ENCODE measurements at regions of chr4 and their contacts with region 1.

Region 1: GRCh38 chr4:112938461-112939058 is 110.9 kb upstream of the ANK2 start:
- DNase-seq: no peak
- ATAC-seq: peak in 1 of 8 donors; percentile 27
- H3K4me3 ChIP-seq: no peak overlapping the region
- H3K27ac ChIP-seq: no peak overlapping the region
- H3K4me1 ChIP-seq: peaks cover 0 to 11% (median 0%) of the 10 kb centered on the region in 9 donors
- H3K27me3 ChIP-seq: no peaks in the 10 kb centered on the region
- CTCF ChIP-seq: peak; percentile 33 to 75 (median 66)

Region 2: DNA sequence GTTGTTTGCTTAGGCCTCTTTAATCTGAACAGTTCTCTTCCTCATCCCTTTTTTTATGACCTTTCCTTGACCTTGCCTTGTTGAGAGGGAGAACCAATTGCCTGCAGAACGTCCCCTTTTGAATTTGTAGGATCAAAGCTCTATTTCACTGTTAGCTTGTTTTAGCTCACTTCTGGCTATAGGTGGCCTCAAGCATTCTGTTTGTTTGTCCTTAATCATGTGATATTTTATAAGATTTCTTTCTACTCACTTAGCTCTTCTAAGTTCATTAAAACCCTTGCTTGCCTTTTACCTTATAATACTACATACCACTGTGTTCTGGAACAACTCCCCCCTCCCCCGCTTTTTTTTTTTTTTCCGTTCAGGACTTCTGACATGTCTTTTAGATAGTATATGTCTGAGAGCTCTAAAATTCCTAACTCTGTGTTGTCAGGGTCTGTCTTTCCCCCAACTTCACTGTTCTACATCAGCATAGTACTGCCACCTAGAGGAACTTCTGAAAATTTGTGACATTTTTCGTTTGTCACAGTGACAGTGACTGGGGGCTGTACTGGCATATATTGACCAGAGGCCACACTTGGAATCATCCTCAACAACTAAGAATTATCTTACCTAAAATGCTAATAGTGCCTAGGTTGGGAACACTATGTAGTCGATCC is 173.1 kb before region 1 on chr4:
- intact Hi-C with region 1: loop called in 7 of 10 experiments (anchors 2 to 10 kb)
- DNase-seq: no peak
- ATAC-seq: peak in 6 of 8 donors; percentile 22 to 66 (median 45)
- H3K4me3 ChIP-seq: no peak overlapping the region
- H3K27ac ChIP-seq: peak overlapping the region in 1 of 10 donors; percentile 10
- H3K4me1 ChIP-seq: peaks cover 0 to 8% (median 0%) of the 10 kb centered on the region in 9 donors
- H3K27me3 ChIP-seq: no peaks in the 10 kb centered on the region
- CTCF ChIP-seq: peak; percentile 14 to 58 (median 47)

Region 3: GRCh38 chr4:112853662-112854256 is 84.8 kb before region 1 on chr4:
- intact Hi-C with region 1: loop called in 3 of 10 experiments (anchors 2 to 10 kb)
- DNase-seq: no peak
- ATAC-seq: no peak
- H3K4me3 ChIP-seq: no peak overlapping the region
- H3K27ac ChIP-seq: no peak overlapping the region
- H3K4me1 ChIP-seq: peaks cover 0 to 30% (median 9%) of the 10 kb centered on the region in 9 donors
- H3K27me3 ChIP-seq: no peaks in the 10 kb centered on the region
- CTCF ChIP-seq: peak in 7 of 9 donors; percentile 22 to 52 (median 35)

Region 4: DNA sequence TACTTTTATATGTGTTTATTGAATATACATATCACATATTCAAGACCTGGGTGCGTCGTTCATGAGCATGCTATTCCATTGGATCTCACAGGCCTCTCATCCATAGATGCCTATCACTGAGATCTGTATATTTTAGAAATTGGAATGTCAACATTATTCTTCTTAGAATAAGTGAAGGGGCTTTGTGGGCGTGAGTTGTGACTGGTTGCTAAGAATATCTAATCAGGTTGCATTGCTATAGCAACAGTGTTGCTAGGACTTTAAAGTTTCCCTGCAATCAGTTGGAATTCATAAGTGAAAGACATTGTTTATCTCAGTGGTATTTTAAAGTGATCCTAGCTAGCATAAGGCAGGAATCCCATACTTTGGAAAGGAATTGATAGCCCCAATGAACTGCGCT is 74.2 kb after region 1 on chr4:
- intact Hi-C with region 1: no loop called
- DNase-seq: no peak
- ATAC-seq: peak in 1 of 8 donors; percentile 30
- H3K4me3 ChIP-seq: no peak overlapping the region
- H3K27ac ChIP-seq: no peak overlapping the region
- H3K4me1 ChIP-seq: peaks cover 0 to 11% (median 0%) of the 10 kb centered on the region in 9 donors
- H3K27me3 ChIP-seq: no peaks in the 10 kb centered on the region
- CTCF ChIP-seq: no peak

Region 5: GRCh38 chr4:113094802-113095201 is 156.2 kb after region 1 on chr4:
- intact Hi-C with region 1: loop called in 1 of 10 experiments (anchors 10 kb)
- DNase-seq: no peak
- ATAC-seq: no peak
- H3K4me3 ChIP-seq: no peak overlapping the region
- H3K27ac ChIP-seq: no peak overlapping the region
- H3K4me1 ChIP-seq: no peaks in the 10 kb centered on the region
- H3K27me3 ChIP-seq: no peaks in the 10 kb centered on the region
- CTCF ChIP-seq: peak; percentile 28 to 72 (median 56)

Region 6: DNA sequence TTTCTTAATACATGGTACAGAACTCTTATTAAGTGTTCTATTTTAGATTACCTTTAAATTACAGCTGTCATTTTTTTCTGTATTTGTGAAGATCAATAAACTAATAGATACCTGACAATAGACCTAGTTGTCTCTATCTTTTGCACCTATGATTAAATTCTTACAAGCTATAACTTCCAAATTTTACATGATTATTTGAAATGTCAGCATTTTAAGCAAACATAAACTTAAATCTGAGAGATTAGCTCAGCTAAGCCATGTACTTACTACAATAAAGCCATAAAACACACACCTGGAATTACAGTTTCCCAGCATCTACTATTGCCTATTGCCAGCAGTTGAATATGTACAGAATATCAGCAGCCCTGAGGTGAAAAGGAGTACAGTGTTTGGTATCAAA is 1778.9 kb after region 1 on chr4:
- intact Hi-C with region 1: no loop called
- DNase-seq: no peak
- ATAC-seq: no peak
- H3K4me3 ChIP-seq: no peak overlapping the region
- H3K27ac ChIP-seq: no peak overlapping the region
- H3K4me1 ChIP-seq: no peaks in the 10 kb centered on the region
- H3K27me3 ChIP-seq: no peaks in the 10 kb centered on the region
- CTCF ChIP-seq: no peak

Measured in heart right ventricle (tissue), 16 donors.